Lower leg skin (tissue), 4 donors: ENCODE measurements at regions of chr9 and their contacts with region 1.

Region 1: GRCh38 chr9:16744394-16744793 is 126.1 kb downstream of the BNC2 start:
- DNase-seq: no peak
- H3K4me3 ChIP-seq: no peak overlapping the region
- CTCF ChIP-seq: no peak
- POLR2A ChIP-seq: no peak

Region 2: GRCh38 chr9:16718952-16719351 is 25.4 kb before region 1 on chr9:
- intact Hi-C with region 1: loop called (anchors 1 kb)
- DNase-seq: no peak
- H3K4me3 ChIP-seq: no peak overlapping the region
- CTCF ChIP-seq: no peak
- POLR2A ChIP-seq: no peak

Region 3: DNA sequence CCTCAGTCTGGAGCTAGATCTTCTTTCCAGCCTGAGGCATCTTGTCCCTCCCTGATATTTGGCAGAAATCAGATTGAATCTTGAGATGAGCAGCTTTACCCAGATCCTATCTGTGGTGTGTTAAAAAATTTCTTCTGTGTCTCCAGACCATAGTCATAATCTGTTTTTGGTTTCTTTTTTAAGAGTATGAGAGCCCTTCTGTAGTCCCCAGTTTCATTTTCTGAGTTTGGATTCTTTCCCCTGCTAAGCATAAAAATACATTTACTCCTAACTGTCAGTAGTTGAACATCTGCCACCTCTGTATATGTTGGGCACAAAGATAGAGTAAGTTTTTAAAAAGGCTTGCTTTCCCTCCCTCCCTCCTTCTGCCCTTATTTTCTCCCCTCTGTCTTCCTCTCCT is 528.1 kb after region 1 on chr9:
- intact Hi-C with region 1: no loop called
- DNase-seq: no peak
- H3K4me3 ChIP-seq: no peak overlapping the region
- CTCF ChIP-seq: no peak
- POLR2A ChIP-seq: no peak